AG04449 (cell line): ENCODE measurements at regions of chr10 and their contacts with region 1.

Region 1: DNA sequence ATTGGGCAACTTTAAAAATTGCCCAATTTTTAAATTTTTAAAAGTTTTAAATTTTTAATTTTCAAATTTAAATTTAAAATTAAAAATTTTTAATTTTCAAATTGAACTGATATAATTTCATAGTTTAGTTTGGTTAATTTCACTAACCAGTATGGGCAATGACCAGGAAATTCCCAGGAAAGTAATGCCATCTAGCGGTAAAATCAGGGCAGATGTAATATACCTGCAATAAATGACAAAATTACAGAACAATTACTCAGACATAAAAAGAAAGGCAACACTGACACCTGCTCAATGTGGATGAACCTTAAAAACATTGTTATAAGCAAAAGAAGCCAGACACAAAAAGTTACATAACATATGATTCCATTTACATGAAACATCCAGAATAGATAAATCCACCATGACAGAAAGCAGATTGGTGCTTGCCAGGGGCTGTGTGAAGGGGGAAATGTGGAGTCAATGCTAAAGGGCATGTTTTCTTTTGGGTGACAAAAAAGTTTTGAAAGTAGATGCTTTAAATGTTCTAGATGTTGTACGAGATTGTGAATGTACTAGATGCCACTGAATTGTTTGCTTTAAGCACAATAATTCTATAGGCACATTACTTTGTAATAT is 28.6 kb upstream of the SLC16A12 start:
- DNase-seq: no peak
- H3K4me3 ChIP-seq: no peak overlapping the region
- CTCF ChIP-seq: peak; percentile 39

Region 2: GRCh38 chr10:89419548-89419947 is 144.4 kb before region 1 on chr10:
- CTCF ChIA-PET with region 1: interaction called, 100 read pairs
- POLR2A ChIA-PET with region 1: no interaction called
- DNase-seq: no peak
- H3K4me3 ChIP-seq: no peak overlapping the region
- CTCF ChIP-seq: peak; percentile 14

Region 3: DNA sequence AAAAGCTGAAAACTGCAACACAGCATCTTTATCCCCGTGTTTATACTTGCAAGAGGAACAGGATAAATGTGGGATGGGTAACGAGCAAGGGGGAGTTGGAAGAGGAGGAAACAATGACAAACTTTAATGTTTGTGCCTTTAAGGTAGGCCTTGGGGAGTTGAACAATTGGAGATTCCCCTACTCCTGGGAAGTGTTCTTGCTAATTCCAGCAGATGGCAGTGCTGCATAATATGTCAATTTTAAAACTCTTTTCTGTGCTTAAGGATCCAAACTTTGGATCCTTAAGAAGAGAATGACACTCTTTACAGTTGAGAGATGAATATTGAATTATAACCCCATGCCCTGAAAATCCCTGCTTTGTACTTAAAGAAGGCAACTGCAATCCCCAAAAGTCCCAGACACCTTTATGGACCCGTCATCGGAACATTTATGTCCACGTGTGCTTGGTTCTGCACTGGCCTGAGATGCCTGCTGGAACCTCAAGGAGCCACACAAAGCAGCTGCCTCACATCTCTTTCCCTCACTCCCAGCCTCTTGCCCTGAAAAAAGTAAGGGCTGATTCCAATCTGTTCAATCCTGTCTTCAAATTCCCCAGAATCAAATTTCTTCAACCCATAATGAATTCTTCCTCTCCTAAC is 137.6 kb before region 1 on chr10:
- CTCF ChIA-PET with region 1: interaction called, 100 read pairs
- POLR2A ChIA-PET with region 1: no interaction called
- DNase-seq: no peak
- H3K4me3 ChIP-seq: no peak overlapping the region
- CTCF ChIP-seq: peak; percentile 49

Region 4: DNA sequence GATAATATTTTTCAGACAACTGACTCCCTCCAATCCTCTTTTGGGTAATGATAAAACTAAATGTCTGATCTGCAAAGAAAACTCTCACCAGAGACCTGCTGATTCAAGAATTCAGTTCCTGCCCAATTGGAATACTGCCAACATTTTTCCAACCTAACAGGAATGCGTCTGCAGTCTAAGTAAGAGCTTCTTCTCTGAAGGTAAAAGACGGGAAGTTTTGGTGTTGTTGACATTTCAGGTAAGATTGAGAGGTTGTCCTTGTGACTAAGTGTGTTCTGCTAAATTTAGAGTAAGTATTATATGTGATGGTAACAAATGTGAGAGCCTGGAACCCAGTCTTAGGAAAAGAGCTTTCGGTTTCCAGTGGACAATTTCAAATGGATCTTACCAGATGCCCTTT is 132.0 kb before region 1 on chr10:
- CTCF ChIA-PET with region 1: interaction called, 100 read pairs
- POLR2A ChIA-PET with region 1: no interaction called
- DNase-seq: no peak
- H3K4me3 ChIP-seq: no peak overlapping the region
- CTCF ChIP-seq: no peak

Region 5: DNA sequence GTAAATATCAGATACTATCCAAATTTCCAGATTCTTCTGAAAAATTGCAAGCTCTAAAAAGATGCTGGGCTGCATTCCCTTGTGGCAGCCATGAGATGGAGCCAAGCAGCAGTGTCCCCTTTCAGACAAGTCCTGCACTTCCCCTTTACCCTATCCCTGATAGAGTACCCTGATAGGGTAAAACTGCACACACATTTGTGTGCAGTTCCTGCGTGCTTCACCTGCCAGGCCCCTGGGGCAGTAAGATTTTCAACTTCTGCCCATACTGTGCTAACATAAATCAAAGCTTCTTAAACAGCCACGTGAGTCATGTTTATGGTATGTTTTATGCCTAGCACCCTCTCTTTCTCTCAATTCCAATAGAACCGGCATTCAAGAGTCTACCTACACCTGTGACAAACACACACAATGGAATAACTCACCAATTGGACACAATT is 97.4 kb before region 1 on chr10:
- CTCF ChIA-PET with region 1: interaction called, 22 read pairs
- POLR2A ChIA-PET with region 1: no interaction called
- DNase-seq: no peak
- H3K4me3 ChIP-seq: no peak overlapping the region
- CTCF ChIP-seq: peak; percentile 51

Region 6: GRCh38 chr10:89553064-89553734 is 10.8 kb before region 1 on chr10:
- CTCF ChIA-PET with region 1: interaction called, 14 read pairs
- POLR2A ChIA-PET with region 1: no interaction called
- DNase-seq: peak; percentile 81
- H3K4me3 ChIP-seq: no peak overlapping the region
- CTCF ChIP-seq: no peak